Activated CD4-positive, alpha-beta memory T cell treated with anti-CD3 and anti-CD28 coated beads for 36 hours (primary cell): ENCODE measurements at regions of chr12 and their contacts with region 1.

Region 1: DNA sequence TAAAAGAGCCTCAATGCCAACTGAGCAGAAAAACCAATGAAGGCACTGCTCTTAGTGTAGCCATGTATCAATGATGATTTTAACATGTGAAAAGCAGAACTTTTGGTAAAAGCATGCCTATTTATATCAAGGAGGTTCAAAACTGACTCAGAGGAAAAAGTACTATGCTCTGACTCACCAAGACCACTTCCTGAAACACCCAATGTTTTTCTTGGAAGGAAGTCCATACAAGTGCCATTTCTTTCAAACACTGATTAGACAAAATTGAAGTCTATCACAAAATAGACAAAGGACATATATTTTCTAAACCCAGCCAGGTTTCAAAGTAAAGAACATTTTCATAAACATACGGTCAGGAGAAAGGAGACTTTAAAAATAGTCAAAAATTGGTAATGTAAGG is 88.6 kb downstream of the EPS8 start:
- DNase-seq: no peak
- H3K4me3 Mint-ChIP-seq: no peak overlapping the region
- H3K27ac Mint-ChIP-seq: peak overlapping the region; percentile 79
- H3K4me1 Mint-ChIP-seq: peaks cover 32% of the 10 kb centered on the region
- H3K27me3 Mint-ChIP-seq: peaks cover 4% of the 10 kb centered on the region

Region 2: DNA sequence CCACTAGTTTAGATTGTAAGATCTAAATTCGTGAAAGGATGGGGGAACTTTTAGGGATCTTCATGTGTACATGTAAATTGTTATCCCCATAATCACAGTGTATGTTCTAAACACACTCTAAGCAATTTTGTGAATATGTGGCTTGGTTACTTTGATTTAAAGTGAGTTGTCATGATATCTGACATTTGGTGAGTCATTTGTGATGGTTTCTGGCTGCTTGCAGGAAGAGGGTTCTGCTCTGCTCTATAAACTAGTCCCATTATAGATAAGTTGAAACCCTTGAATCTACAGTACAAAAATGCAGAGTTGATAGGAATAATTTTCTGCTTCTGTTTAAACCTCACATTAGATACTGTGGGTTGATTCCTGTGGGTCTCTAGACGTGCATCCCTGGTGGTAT is 1019.0 kb before region 1 on chr12:
- CTCF ChIA-PET with region 1: no interaction called
- POLR2A ChIA-PET with region 1: no interaction called
- intact Hi-C with region 1: loop called (anchors 5 kb)
- DNase-seq: no peak
- H3K4me3 Mint-ChIP-seq: no peak overlapping the region
- H3K27ac Mint-ChIP-seq: no peak overlapping the region
- H3K4me1 Mint-ChIP-seq: peaks cover 5% of the 10 kb centered on the region
- H3K27me3 Mint-ChIP-seq: peaks cover 5% of the 10 kb centered on the region

Region 3: GRCh38 chr12:15575671-15576541 is 124.7 kb before region 1 on chr12:
- CTCF ChIA-PET with region 1: no interaction called
- POLR2A ChIA-PET with region 1: no interaction called
- intact Hi-C with region 1: loop called (anchors 5 kb)
- DNase-seq: no peak
- H3K4me3 Mint-ChIP-seq: no peak overlapping the region
- H3K27ac Mint-ChIP-seq: peak overlapping the region; percentile 7
- H3K4me1 Mint-ChIP-seq: peaks cover 39% of the 10 kb centered on the region
- H3K27me3 Mint-ChIP-seq: no peaks in the 10 kb centered on the region

Region 4: GRCh38 chr12:15590180-15590826 is 110.3 kb before region 1 on chr12:
- CTCF ChIA-PET with region 1: no interaction called
- POLR2A ChIA-PET with region 1: no interaction called
- intact Hi-C with region 1: loop called (anchors 5 kb)
- DNase-seq: peak; percentile 56
- H3K4me3 Mint-ChIP-seq: peak overlapping the region; percentile 70
- H3K27ac Mint-ChIP-seq: peak overlapping the region; percentile 21
- H3K4me1 Mint-ChIP-seq: peaks cover 8% of the 10 kb centered on the region
- H3K27me3 Mint-ChIP-seq: no peaks in the 10 kb centered on the region

Region 5: DNA sequence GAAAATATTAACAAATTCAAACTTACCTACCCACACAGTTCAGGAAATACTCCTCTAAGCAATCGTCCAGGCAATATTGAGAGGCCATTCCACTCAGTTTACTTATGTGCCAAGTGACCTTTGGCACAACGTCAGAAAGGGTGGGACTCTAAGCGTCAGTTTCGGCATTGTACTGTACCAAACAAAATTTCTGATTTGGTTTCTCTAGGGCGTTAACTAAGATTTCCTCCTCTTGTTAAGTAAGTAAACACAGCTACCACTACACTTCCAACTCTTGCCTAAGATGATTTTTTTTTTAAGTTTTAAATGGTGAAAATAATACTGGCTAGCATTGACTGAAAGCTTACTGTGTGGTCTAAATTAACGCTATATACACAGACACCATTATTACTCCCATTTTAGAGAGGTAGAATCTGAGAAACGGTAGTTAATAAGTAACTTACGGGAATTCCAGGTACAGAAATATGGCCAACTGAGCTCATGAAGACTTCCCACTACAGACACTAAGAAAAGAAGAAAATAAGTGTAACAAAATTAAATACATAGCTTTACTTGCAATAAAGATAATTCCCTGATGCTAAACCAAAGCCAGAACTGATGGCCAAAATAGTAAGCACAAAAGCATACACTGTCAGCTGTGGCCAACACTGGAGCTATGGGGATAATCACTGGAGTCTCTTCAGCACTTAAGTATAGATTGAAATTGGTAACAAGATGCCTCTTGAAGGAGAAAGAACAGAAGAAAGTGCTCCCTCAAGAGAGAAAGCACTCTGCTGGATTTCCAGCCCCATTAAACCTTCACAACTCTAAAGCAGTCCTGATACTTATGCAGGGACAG is 12.4 kb after region 1 on chr12:
- CTCF ChIA-PET with region 1: no interaction called
- POLR2A ChIA-PET with region 1: no interaction called
- intact Hi-C with region 1: loop called (anchors 1 kb)
- DNase-seq: no peak
- H3K4me3 Mint-ChIP-seq: no peak overlapping the region
- H3K27ac Mint-ChIP-seq: no peak overlapping the region
- H3K4me1 Mint-ChIP-seq: peaks cover 8% of the 10 kb centered on the region
- H3K27me3 Mint-ChIP-seq: peaks cover 1% of the 10 kb centered on the region

Region 6: DNA sequence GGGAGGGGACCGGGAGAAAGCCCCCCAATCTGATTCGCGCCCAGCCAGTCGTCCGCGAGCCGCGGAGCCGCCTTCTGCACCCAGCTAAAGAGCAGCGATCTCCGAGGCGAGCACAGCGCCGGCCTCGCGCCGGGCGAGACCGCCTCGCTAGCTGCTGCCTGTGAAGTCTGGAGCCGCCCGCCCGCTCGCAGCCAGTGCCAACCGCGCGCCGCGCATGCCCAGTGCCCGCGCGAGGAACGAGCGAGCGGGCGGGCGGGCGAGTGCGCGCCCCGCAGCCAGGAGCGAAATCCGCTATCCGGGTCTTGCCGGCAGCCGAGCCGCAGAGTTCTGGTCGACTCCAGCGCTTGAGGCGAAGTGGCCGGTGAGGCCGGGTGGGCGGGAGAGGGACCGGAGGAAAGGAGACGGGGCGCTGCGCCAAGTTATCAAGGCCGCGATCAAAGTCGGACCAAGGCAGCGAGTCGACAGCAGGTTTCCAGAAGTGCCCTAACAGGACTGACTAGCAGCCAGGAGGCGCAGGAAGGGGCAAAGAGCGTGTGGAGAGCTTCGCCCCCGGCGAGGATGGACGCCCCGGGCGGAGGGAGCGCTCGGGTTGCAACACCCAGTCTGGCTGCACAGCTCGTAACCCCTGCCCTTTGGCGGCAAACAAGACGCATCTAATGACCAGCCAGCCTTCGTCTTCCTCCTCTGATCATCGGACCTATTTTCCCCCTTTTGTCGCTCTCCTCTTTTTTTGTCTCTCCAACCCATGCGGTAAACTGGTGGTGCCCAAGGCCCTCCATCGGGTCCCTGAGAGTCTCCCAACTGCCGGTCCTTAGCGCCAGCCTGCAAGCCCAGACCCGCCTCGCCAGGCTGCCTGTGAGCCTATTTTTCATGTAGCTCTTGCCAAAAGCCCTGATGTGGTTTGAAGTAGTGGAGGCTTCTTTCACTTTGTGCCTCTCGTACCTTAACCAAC is 88.9 kb after region 1 on chr12 and contains the start of gene EPS8:
- CTCF ChIA-PET with region 1: no interaction called
- POLR2A ChIA-PET with region 1: no interaction called
- intact Hi-C with region 1: loop called (anchors 1 kb)
- DNase-seq: peak; percentile 91
- H3K4me3 Mint-ChIP-seq: peak within 1 kb of the TSS; percentile 79
- H3K27ac Mint-ChIP-seq: peak within 1 kb of the TSS; percentile 15
- H3K4me1 Mint-ChIP-seq: peaks cover 14% of the 10 kb centered on the region
- H3K27me3 Mint-ChIP-seq: peaks cover 33% of the 10 kb centered on the region
- total RNA-seq, gene EPS8: 3.2 to 3.5 TPM

Region 7: DNA sequence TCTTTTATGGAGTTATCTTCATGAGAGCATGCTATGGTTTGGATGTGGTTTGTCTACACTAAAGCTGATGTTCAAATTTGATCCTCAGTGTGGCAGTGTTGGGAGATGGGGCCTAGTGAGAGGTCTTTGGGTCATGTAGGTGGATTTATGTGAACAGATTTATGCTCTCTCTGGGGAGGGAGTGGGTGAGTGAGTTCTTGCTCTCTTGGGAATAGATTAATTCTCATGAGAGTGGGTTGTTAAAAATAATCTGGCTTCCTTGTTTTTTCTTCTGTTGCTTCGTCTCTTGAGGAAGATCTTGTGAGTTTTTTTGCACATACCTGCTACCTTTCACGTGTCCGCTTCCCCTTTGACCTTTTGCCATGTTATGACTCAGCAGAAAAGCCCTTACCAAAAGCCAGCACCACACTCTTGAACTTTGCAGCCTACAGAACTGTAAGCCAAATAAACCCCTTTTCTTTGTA is 231.0 kb after region 1 on chr12:
- CTCF ChIA-PET with region 1: no interaction called
- POLR2A ChIA-PET with region 1: no interaction called
- intact Hi-C with region 1: no loop called
- DNase-seq: no peak
- H3K4me3 Mint-ChIP-seq: no peak overlapping the region
- H3K27ac Mint-ChIP-seq: no peak overlapping the region
- H3K4me1 Mint-ChIP-seq: peaks cover 2% of the 10 kb centered on the region
- H3K27me3 Mint-ChIP-seq: no peaks in the 10 kb centered on the region